ENCODE measurements at regions of chr5 and their contacts with region 1.

Region 1: DNA sequence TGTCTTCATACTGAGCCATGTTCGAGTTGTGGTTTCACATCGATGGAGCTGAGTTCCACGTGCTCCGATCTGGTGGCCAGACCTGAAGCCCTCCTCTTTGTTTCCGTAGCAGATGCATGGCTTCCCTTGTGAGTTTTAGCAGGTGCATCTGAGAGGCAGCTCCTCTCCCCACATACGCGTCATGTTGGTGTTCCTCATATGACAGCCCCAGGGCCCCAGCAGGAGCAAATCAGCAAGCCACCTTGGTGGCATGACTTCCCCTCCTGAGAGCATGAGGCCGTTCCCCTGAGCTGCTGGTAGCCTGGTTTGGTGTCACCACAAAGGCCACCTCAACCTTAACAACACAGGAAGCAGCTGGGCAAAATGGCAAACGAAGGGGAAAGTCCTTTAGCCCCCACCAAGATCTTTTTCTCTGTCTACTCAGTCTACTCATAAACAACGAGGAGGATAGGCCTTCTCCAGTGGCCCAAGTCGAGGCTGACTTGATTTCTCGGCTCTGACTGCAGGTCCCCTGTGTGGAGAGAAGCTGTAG is 5.9 kb downstream of the CYFIP2 start:
- DNase-seq: peak; percentile 93
- ATAC-seq: peak; percentile 80
- H3K4me3 ChIP-seq: peak overlapping the region; percentile 60; the same call in 1 of the 2 replicates
- H3K27ac ChIP-seq: peak overlapping the region; percentile 97
- H3K4me1 ChIP-seq: peaks cover 56% of the 10 kb centered on the region
- H3K27me3 ChIP-seq: no peaks in the 10 kb centered on the region
- CTCF ChIP-seq: no peak
- EP300 ChIP-seq: peak; percentile 72 to 75; a peak in 3 of 4 replicates
- POLR2A ChIP-seq: peak; percentile 82
- RAD21 ChIP-seq: no peak

Region 2: DNA sequence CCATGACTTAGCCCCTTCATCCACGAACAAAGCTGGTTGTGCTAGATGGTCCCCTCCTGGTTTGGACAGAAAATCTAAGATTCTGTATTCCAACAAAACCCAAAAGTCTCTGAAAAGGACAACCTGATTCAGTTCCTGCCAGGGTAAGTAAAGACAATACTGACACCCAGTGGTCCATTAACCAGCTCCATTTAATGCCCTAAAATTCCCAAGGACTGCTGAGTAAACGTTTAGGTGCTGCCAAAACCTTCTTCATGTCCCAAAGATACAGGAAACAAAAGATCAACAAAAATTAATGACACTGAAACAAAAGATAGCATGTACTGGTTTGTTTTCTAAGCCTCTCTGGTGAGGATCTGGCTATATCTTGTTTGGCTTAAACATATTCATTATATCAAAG is 447.0 kb before region 1 on chr5:
- CTCF ChIA-PET with region 1: no interaction called
- POLR2A ChIA-PET with region 1: no interaction called
- RAD21 ChIA-PET with region 1: no interaction called
- SMC1A ChIA-PET with region 1: no interaction called
- in situ Hi-C with region 1: no loop called
- intact Hi-C with region 1: no loop called
- DNase-seq: no peak
- ATAC-seq: no peak
- H3K4me3 ChIP-seq: no peak overlapping the region
- H3K27ac ChIP-seq: no peak overlapping the region
- H3K4me1 ChIP-seq: peaks cover 11% of the 10 kb centered on the region
- H3K27me3 ChIP-seq: no peaks in the 10 kb centered on the region
- CTCF ChIP-seq: peak; percentile 4 to 45 (median 19); a peak in 2 of 6 replicates
- EP300 ChIP-seq: no peak
- POLR2A ChIP-seq: no peak
- RAD21 ChIP-seq: peak; percentile 49

Region 3: GRCh38 chr5:157142317-157143126 is 129.3 kb before region 1 on chr5 and contains the start of gene MED7:
- CTCF ChIA-PET with region 1: interaction called, 6 read pairs
- POLR2A ChIA-PET with region 1: interaction called, 27 read pairs
- RAD21 ChIA-PET with region 1: interaction called, 12 read pairs
- SMC1A ChIA-PET with region 1: interaction called, 21 read pairs
- in situ Hi-C with region 1: no loop called
- intact Hi-C with region 1: loop called (anchors 5 kb)
- DNase-seq: peak; percentile 99
- ATAC-seq: peak; percentile 100
- H3K4me3 ChIP-seq: peak within 1 kb of the TSS; percentile 88
- H3K27ac ChIP-seq: peak within 1 kb of the TSS; percentile 99
- H3K4me1 ChIP-seq: peaks cover 7% of the 10 kb centered on the region
- H3K27me3 ChIP-seq: no peaks in the 10 kb centered on the region
- CTCF ChIP-seq: no peak
- EP300 ChIP-seq: no peak
- POLR2A ChIP-seq: peak; percentile 96
- RAD21 ChIP-seq: no peak
- polyA plus RNA-seq, gene MED7: 42.6 to 47.7 TPM

Region 4: DNA sequence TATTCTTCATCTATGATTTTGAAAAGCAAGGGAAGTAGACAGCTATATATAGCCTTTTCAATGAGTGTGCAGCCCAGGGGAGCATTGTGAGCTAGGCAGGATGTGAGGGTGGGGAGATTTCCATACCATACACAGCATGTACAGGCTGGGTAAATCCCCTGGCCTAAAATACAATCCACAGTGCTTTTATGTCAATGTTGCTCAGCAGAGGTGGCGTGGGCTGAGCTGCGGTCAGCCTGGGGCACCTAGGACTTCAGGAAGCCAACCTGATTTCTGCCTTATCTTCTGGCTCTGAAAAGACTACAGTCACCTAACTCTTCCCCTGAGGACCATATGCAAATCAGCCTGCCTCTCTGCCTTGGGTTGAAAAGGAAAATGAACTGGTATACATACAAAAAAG is 99.4 kb before region 1 on chr5:
- CTCF ChIA-PET with region 1: interaction called, 3 read pairs
- POLR2A ChIA-PET with region 1: interaction called, 12 read pairs
- RAD21 ChIA-PET with region 1: interaction called, 10 read pairs
- SMC1A ChIA-PET with region 1: interaction called, 21 read pairs
- in situ Hi-C with region 1: no loop called
- intact Hi-C with region 1: no loop called
- DNase-seq: peak; percentile 98
- ATAC-seq: peak; percentile 98
- H3K4me3 ChIP-seq: no peak overlapping the region
- H3K27ac ChIP-seq: peak overlapping the region; percentile 93
- H3K4me1 ChIP-seq: peaks cover 14% of the 10 kb centered on the region
- H3K27me3 ChIP-seq: no peaks in the 10 kb centered on the region
- CTCF ChIP-seq: no peak
- EP300 ChIP-seq: peak; percentile 88 to 94; a peak in 3 of 4 replicates
- POLR2A ChIP-seq: no peak
- RAD21 ChIP-seq: 0 out of 2 replicates have a peak, but pooled peaks have one; percentile 30

Region 5: GRCh38 chr5:157283434-157283833 is 11.6 kb after region 1 on chr5:
- CTCF ChIA-PET with region 1: interaction called, 19 read pairs
- POLR2A ChIA-PET with region 1: interaction called, 41 read pairs
- RAD21 ChIA-PET with region 1: interaction called, 36 read pairs
- SMC1A ChIA-PET with region 1: interaction called, 24 read pairs
- in situ Hi-C with region 1: no loop called
- intact Hi-C with region 1: no loop called
- DNase-seq: peak; percentile 65
- ATAC-seq: peak; percentile 99
- H3K4me3 ChIP-seq: no peak overlapping the region
- H3K27ac ChIP-seq: no peak overlapping the region
- H3K4me1 ChIP-seq: peaks cover 21% of the 10 kb centered on the region
- H3K27me3 ChIP-seq: no peaks in the 10 kb centered on the region
- CTCF ChIP-seq: no peak
- EP300 ChIP-seq: no peak
- POLR2A ChIP-seq: no peak
- RAD21 ChIP-seq: no peak

Region 6: DNA sequence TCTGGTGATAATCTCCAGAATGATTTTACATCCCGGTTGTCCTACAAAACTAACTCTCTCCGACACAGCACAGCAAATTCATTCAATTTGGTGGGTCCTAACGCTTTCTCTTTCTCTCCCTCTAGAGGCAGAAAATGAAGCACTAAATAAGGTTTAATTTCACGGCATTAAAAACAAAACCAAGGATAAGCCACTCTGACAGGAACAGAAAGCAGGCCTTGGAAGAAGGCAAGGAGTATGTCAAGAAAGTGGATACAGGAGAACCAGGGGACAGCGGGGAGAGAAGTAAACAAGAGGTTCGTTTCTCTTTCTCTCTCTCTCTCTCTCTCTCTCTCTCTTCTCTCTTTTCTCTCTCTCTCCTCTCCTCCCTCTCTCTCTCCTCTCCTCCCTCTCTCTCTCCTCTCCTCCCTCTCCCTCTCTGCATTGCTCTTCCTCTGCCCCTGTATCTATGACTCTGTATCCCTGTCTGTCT is 1778.1 kb after region 1 on chr5:
- CTCF ChIA-PET with region 1: no interaction called
- POLR2A ChIA-PET with region 1: no interaction called
- RAD21 ChIA-PET with region 1: no interaction called
- SMC1A ChIA-PET with region 1: no interaction called
- in situ Hi-C with region 1: no loop called
- intact Hi-C with region 1: loop called (anchors 10 kb)
- DNase-seq: no peak
- ATAC-seq: peak; percentile 1
- H3K4me3 ChIP-seq: peak overlapping the region; percentile 49
- H3K27ac ChIP-seq: peak overlapping the region; percentile 70
- H3K4me1 ChIP-seq: peaks cover 17% of the 10 kb centered on the region
- H3K27me3 ChIP-seq: no peaks in the 10 kb centered on the region
- CTCF ChIP-seq: peak; percentile 15 to 45 (median 32); a peak in 5 of 6 replicates
- EP300 ChIP-seq: no peak
- POLR2A ChIP-seq: no peak
- RAD21 ChIP-seq: peak; percentile 59

Measured in GM12878 (cell line).